ENCODE measurements at regions of chr7 and their contacts with region 1.

Region 1: GRCh38 chr7:22732556-22733126 is 5.6 kb downstream of the IL6 start:
- DNase-seq: no peak
- H3K4me3 ChIP-seq: no peak overlapping the region
- H3K27ac ChIP-seq: no peak overlapping the region
- H3K4me1 ChIP-seq: peaks cover 0 to 2% (median 0%) of the 10 kb centered on the region in 4 experiments; a peak in 1 of 7 replicates
- H3K27me3 ChIP-seq: no peaks in the 10 kb centered on the region
- CTCF ChIP-seq: peak in 2 of 3 experiments; percentile 33 to 53; a peak in 2 of 4 replicates
- EP300 ChIP-seq: no peak
- POLR2A ChIP-seq: no peak
- RAD21 ChIP-seq: peak; percentile 58 to 61

Region 2: DNA sequence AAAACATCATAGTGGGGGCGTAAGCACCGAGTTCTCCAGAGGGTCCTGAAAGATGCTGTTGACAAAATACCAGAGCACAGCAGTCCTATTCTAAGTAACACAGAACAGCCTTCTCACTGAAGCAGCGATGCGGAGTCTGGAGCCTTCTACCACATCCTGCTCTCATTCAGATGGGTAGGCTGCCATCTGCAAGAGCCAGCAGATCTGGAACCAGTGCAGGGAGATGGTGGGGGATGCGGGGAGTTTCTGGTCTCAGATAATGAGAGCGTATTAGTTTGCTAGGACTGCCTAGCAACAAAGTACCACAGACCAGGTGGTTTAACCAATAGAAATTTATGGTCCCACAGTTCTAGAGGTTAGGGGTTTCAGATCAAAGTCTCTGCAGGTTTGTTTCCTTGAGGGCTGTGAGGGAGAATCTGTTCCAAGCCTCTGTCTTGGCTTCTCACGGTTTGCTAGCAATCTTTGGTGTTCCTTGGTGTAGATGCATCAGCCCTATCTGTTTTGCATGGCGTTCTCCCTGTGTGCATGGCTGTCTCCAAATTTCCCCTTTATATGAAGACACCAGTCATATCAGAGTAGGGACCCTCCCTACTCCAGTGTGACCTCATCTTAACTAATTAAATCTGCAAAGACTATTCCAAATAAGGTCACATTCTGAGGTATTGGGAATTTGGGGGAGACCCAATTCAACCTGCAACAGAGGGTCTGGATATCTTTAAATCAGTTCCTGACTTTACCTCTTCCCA is 180.7 kb before region 1 on chr7:
- CTCF ChIA-PET with region 1: interaction called, 50 read pairs
- POLR2A ChIA-PET with region 1: interaction called, 4 read pairs
- DNase-seq: peak in 1 of 2 experiments; percentile 39
- H3K4me3 ChIP-seq: no peak overlapping the region
- H3K27ac ChIP-seq: no peak overlapping the region
- H3K4me1 ChIP-seq: peaks cover 0 to 7% (median 4%) of the 10 kb centered on the region in 4 experiments; a peak in 4 of 7 replicates
- H3K27me3 ChIP-seq: no peaks in the 10 kb centered on the region
- CTCF ChIP-seq: no peak
- EP300 ChIP-seq: no peak
- POLR2A ChIP-seq: no peak
- RAD21 ChIP-seq: no peak

Region 3: DNA sequence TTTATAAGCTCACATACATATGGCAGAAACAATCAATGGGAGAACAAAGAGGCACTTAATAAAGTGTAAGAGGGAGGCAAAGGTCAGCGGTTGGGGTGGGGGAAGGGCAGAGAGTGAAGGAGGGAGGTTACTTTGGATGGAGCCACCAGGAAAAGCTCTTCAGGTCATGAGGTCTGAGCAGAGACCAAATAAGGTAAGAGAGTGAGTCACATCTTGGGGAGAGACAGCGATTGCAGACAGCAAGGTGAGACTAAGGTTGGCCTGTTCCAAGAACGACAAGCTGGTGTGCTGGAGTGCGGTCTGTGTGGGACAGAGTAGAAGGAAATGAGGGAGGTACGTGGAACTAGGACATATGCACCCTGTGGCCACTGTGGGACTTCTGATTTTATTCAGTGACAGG is 164.3 kb after region 1 on chr7:
- CTCF ChIA-PET with region 1: no interaction called
- POLR2A ChIA-PET with region 1: no interaction called
- DNase-seq: peak in 1 of 2 experiments; percentile 45
- H3K4me3 ChIP-seq: no peak overlapping the region
- H3K27ac ChIP-seq: no peak overlapping the region
- H3K4me1 ChIP-seq: peaks cover 0 to 7% (median 0%) of the 10 kb centered on the region in 4 experiments; a peak in 2 of 7 replicates
- H3K27me3 ChIP-seq: no peaks in the 10 kb centered on the region
- CTCF ChIP-seq: no peak
- EP300 ChIP-seq: no peak; a peak in 1 of 3 replicates
- POLR2A ChIP-seq: no peak
- RAD21 ChIP-seq: no peak